HEK293 (cell line): ENCODE measurements at regions of chr6 and their contacts with region 1.

Region 1: GRCh38 chr6:7615611-7616383 is 25.8 kb downstream of the SNRNP48 start:
- H3K4me3 ChIP-seq: no peak overlapping the region
- H3K27ac ChIP-seq: no peak overlapping the region
- H3K4me1 ChIP-seq: 0 out of 2 replicates have a peak, but pooled peaks cover 2% of the 10 kb centered on the region
- CTCF ChIP-seq: peak; percentile 35

Region 2: DNA sequence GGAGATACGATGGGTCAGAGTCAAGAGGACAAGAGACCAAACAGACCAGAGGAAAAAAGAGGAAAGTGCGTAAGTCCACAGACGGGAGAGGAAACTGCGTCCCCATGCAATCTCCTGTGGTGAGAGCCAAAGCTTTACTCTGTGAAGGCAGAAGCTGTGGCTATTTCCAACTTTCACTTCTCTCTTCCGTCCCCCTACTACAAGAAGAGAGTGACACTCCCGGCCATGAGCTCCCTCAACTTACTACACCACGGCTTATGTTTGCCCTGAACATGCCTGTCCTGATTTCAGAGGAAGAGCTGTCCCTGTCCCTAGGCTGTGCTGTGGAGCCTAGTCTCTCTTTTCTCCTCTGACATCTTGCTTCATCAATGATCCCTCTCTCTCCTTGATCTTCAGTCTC is 291.3 kb before region 1 on chr6:
- CTCF ChIA-PET with region 1: interaction called, 10 read pairs
- POLR2A ChIA-PET with region 1: no interaction called
- H3K4me3 ChIP-seq: no peak overlapping the region
- H3K27ac ChIP-seq: no peak overlapping the region
- H3K4me1 ChIP-seq: no peaks in the 10 kb centered on the region
- CTCF ChIP-seq: no peak

Region 3: GRCh38 chr6:7604506-7604905 is 11.3 kb before region 1 on chr6:
- CTCF ChIA-PET with region 1: interaction called, 14 read pairs
- POLR2A ChIA-PET with region 1: interaction called, 4 read pairs
- H3K4me3 ChIP-seq: no peak overlapping the region
- H3K27ac ChIP-seq: no peak overlapping the region
- H3K4me1 ChIP-seq: no peaks in the 10 kb centered on the region
- CTCF ChIP-seq: no peak

Region 4: GRCh38 chr6:7644417-7644816 is 28.6 kb after region 1 on chr6:
- CTCF ChIA-PET with region 1: no interaction called
- POLR2A ChIA-PET with region 1: no interaction called
- H3K4me3 ChIP-seq: no peak overlapping the region
- H3K27ac ChIP-seq: no peak overlapping the region
- H3K4me1 ChIP-seq: no peaks in the 10 kb centered on the region
- CTCF ChIP-seq: no peak